MCF 10A (cell line): ENCODE measurements at regions of chr5 and their contacts with region 1.

Region 1: GRCh38 chr5:119070828-119071572 is at the start of gene DMXL1:
- DNase-seq: peak; percentile 100
- H3K4me3 Mint-ChIP-seq: peak within 1 kb of the TSS; percentile 77
- H3K27ac Mint-ChIP-seq: peak within 1 kb of the TSS; percentile 79
- H3K4me1 Mint-ChIP-seq: peaks cover 24% of the 10 kb centered on the region
- H3K27me3 Mint-ChIP-seq: no peaks in the 10 kb centered on the region
- CTCF ChIP-seq: no peak
- total RNA-seq, gene DMXL1: 38.1 and 45.1 TPM in 2 replicates

Region 2: GRCh38 chr5:117486869-117487472 is 1584.0 kb before region 1 on chr5:
- CTCF ChIA-PET with region 1: no interaction called
- POLR2A ChIA-PET with region 1: no interaction called
- intact Hi-C with region 1: no loop called
- DNase-seq: peak; percentile 10
- H3K4me3 Mint-ChIP-seq: no peak overlapping the region
- H3K27ac Mint-ChIP-seq: no peak overlapping the region
- H3K4me1 Mint-ChIP-seq: no peaks in the 10 kb centered on the region
- H3K27me3 Mint-ChIP-seq: no peaks in the 10 kb centered on the region
- CTCF ChIP-seq: no peak

Region 3: GRCh38 chr5:119036101-119036762 is 34.8 kb before region 1 on chr5:
- CTCF ChIA-PET with region 1: no interaction called
- POLR2A ChIA-PET with region 1: interaction called, 13 read pairs
- intact Hi-C with region 1: no loop called
- DNase-seq: peak; percentile 83
- H3K4me3 Mint-ChIP-seq: no peak overlapping the region
- H3K27ac Mint-ChIP-seq: no peak overlapping the region
- H3K4me1 Mint-ChIP-seq: peaks cover 12% of the 10 kb centered on the region
- H3K27me3 Mint-ChIP-seq: no peaks in the 10 kb centered on the region
- CTCF ChIP-seq: no peak

Region 4: DNA sequence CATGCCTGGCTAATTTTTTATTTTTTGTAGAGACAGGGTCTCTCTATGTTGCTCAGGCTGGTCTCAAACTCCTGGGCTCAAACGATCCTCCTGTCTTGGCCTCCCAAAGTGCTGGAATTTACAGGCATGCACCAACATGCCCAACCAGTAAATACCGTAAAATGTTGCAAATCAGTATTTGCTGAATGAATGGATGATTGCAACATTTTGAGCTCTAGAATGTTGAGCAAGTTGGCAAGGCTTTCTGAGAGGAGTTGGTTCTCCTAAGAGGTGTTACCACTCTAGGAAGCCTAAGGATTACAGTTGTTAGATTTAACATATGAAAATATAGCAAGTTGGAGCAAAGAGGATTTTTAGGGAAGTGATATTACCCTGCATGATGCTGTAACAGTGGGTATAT is 15.7 kb before region 1 on chr5:
- CTCF ChIA-PET with region 1: interaction called, 3 read pairs
- POLR2A ChIA-PET with region 1: interaction called, 27 read pairs
- intact Hi-C with region 1: no loop called
- DNase-seq: peak; percentile 83
- H3K4me3 Mint-ChIP-seq: no peak overlapping the region
- H3K27ac Mint-ChIP-seq: peak overlapping the region; percentile 87
- H3K4me1 Mint-ChIP-seq: peaks cover 8% of the 10 kb centered on the region
- H3K27me3 Mint-ChIP-seq: no peaks in the 10 kb centered on the region
- CTCF ChIP-seq: no peak

Region 5: DNA sequence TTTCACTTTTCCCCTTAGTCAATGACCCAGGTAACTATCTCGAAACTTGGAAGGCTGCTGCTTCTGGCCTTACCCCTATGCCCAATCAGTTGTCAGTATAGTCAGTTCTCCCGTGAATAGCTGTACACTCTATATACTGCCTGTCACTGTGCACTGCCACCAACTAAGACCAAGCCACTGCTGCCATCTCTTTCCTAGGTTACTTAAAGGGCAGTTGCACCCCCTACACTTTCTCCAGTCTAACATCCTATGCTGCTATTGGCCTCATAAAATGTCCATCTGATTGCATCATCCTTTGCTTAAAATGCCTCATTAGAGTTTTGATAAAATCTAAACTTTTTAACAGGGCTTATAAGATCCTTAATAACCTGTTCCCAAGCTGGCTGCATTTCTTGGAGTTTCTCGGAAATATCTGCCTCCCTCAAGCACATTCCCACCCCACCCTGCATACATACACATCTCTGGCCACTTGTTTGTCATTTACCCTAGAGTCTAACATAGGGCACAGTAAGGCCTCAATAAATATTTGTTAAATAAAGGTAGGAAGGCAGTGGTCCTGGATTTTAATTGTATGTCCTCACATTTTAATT is 252.0 kb after region 1 on chr5:
- CTCF ChIA-PET with region 1: no interaction called
- POLR2A ChIA-PET with region 1: interaction called, 20 read pairs
- intact Hi-C with region 1: no loop called
- DNase-seq: peak; percentile 54
- H3K4me3 Mint-ChIP-seq: no peak overlapping the region
- H3K27ac Mint-ChIP-seq: peak overlapping the region; percentile 98
- H3K4me1 Mint-ChIP-seq: peaks cover 44% of the 10 kb centered on the region
- H3K27me3 Mint-ChIP-seq: no peaks in the 10 kb centered on the region
- CTCF ChIP-seq: no peak

Region 6: DNA sequence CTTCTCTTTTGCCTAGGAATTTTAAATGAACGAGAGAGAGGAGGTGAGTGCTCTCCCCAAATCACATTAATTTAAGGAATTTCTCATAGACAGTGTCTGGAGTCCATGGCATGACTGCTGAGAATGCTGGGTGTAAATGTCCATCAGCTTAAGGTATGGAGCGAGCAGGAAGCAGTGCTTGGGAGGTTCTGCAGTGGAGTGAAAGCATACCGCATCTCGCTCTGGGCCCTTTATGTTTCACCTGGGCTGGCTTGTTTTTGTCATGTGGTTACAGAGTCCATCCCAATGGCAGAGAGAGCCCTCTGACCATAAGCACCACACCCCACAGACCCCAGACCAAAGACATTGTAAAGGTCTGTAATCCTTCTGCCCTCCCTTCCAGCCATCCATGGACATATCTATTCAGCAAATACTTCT is 264.3 kb after region 1 on chr5:
- CTCF ChIA-PET with region 1: interaction called, 3 read pairs
- POLR2A ChIA-PET with region 1: interaction called, 39 read pairs
- intact Hi-C with region 1: loop called (anchors 1 kb)
- DNase-seq: no peak
- H3K4me3 Mint-ChIP-seq: peak overlapping the region; percentile 72
- H3K27ac Mint-ChIP-seq: peak overlapping the region; percentile 76
- H3K4me1 Mint-ChIP-seq: peaks cover 45% of the 10 kb centered on the region
- H3K27me3 Mint-ChIP-seq: no peaks in the 10 kb centered on the region
- CTCF ChIP-seq: no peak

Region 7: GRCh38 chr5:119397518-119398380 is 326.7 kb after region 1 on chr5:
- CTCF ChIA-PET with region 1: no interaction called
- POLR2A ChIA-PET with region 1: interaction called, 8 read pairs
- intact Hi-C with region 1: loop called (anchors 2 kb)
- DNase-seq: peak; percentile 87
- H3K4me3 Mint-ChIP-seq: peak overlapping the region; percentile 63
- H3K27ac Mint-ChIP-seq: peak overlapping the region; percentile 94
- H3K4me1 Mint-ChIP-seq: peaks cover 48% of the 10 kb centered on the region
- H3K27me3 Mint-ChIP-seq: no peaks in the 10 kb centered on the region
- CTCF ChIP-seq: no peak

Region 8: DNA sequence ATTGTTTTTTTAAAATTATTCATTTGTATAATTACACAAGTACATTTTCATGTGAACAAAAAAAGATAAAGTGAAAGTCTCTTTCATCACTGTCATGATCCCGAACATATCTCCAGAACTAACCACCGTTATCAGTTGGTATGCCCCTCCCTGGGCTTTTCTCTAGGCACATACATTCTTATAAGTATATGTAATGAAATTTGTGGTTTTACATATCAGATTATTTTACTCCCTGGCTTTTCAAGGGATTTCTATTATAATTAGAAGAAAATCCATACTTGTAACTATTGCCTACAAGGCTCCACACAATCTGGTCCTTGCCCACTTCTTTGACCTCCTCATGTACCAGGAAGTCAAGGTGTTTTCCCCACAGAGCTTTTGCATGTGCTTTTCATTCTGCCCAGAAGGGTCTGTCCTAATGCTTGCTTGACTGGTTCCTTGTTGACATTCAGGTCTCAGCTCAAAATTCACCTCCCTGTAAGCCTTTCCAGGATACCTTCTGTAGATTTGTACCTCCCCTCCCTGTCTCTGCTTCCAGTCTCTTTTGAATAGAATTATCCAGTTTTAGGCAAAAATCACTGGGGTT is 347.6 kb after region 1 on chr5:
- CTCF ChIA-PET with region 1: interaction called, 3 read pairs
- POLR2A ChIA-PET with region 1: interaction called, 47 read pairs
- intact Hi-C with region 1: no loop called
- DNase-seq: no peak
- H3K4me3 Mint-ChIP-seq: no peak overlapping the region
- H3K27ac Mint-ChIP-seq: no peak overlapping the region
- H3K4me1 Mint-ChIP-seq: peaks cover 32% of the 10 kb centered on the region
- H3K27me3 Mint-ChIP-seq: no peaks in the 10 kb centered on the region
- CTCF ChIP-seq: no peak